PC-3 (cell line): ENCODE measurements at regions of chr4 and their contacts with region 1.

Region 1: DNA sequence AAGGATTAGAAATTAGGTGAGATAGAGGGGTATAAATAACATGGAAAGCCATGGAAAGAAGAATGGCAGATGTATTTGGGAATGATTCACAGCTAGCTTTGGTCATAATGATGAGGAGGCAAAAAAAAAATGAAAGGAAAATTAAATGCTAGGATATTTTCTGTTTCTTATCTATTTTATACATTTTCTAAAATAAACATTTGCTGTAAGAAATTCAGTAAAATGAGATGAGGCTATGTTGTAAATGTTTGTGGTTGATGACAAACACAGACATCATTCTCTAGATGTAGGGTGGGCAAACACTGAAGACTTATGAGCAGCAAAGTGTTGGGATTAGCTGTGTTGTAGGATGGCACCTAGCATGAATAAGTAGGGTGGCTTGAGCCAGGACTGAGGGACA is 407.1 kb downstream of the IL15 start:
- DNase-seq: peak; percentile 89
- ATAC-seq: peak; percentile 96
- H3K4me3 ChIP-seq: no peak overlapping the region
- H3K27ac ChIP-seq: peak overlapping the region; percentile 48
- H3K4me1 ChIP-seq: peaks cover 41% of the 10 kb centered on the region
- H3K27me3 ChIP-seq: no peaks in the 10 kb centered on the region
- CTCF ChIP-seq: no peak

Region 2: GRCh38 chr4:142120921-142121320 is 77.4 kb after region 1 on chr4:
- CTCF ChIA-PET with region 1: no interaction called
- POLR2A ChIA-PET with region 1: no interaction called
- intact Hi-C with region 1: loop called (anchors 2 kb)
- DNase-seq: no peak
- ATAC-seq: no peak
- H3K4me3 ChIP-seq: no peak overlapping the region
- H3K27ac ChIP-seq: no peak overlapping the region
- H3K4me1 ChIP-seq: no peaks in the 10 kb centered on the region
- H3K27me3 ChIP-seq: no peaks in the 10 kb centered on the region
- CTCF ChIP-seq: no peak